CD8-positive, alpha-beta memory T cell (primary cell): ENCODE measurements at regions of chr3 and their contacts with region 1.

Region 1: GRCh38 chr3:50095352-50095998 is 6.8 kb downstream of the RBM5 start:
- DNase-seq: no peak
- H3K4me3 ChIP-seq: no peak overlapping the region
- H3K4me3 Mint-ChIP-seq: peak overlapping the region in 1 of 7 donors; percentile 62
- H3K27ac ChIP-seq: no peak overlapping the region
- H3K27ac Mint-ChIP-seq: peak overlapping the region in 4 of 8 donors; percentile 6 to 61 (median 30)
- H3K4me1 ChIP-seq: peaks cover 16% of the 10 kb centered on the region
- H3K4me1 Mint-ChIP-seq: peaks cover 34 to 50% (median 36%) of the 10 kb centered on the region in 3 donors
- H3K27me3 ChIP-seq: no peaks in the 10 kb centered on the region
- H3K27me3 Mint-ChIP-seq: no peaks in the 10 kb centered on the region

Region 2: DNA sequence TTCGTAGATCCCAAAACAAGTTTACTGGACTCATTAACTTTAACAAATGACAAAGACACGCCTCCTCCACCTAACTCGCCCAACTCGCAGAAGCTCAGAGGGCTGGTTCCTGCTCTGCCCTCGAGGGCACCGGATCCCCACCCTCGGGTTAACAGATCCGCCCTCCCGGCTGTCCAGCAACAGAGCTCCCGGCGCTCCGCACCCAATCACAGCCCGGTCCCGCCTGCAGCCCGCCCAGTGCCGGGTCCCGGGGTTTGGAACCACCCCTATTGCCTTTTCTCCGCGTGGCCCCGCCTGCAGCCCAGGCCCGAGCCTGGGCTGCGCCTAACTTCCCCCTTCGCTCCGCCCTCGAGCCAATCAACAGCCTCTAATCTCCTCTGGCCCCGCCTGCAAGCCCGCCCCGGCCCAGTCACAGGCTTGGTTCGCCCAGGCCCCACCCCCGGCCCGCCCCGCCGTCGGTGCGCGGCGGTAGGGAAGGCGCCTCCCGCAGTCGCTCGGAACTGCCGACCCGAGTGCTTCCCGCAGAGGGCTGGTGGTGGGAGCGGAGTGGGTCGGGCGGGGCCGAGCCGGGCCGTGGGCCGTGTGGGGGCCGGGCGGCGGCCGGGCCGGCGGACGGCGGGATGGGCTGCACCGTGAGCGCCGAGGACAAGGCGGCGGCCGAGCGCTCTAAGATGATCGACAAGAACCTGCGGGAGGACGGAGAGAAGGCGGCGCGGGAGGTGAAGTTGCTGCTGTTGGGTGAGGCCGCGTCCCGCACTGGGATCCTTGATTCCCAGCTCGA is 140.4 kb after region 1 on chr3 and contains the start of gene GNAI2:
- CTCF ChIA-PET with region 1: no interaction called
- POLR2A ChIA-PET with region 1: interaction called, 13 read pairs
- DNase-seq: peak; percentile 98 to 99 (median 99)
- H3K4me3 ChIP-seq: peak within 1 kb of the TSS; percentile 99
- H3K4me3 Mint-ChIP-seq: peak within 1 kb of the TSS; percentile 87 to 99 (median 98)
- H3K27ac ChIP-seq: peak within 1 kb of the TSS; percentile 71
- H3K27ac Mint-ChIP-seq: peak within 1 kb of the TSS; percentile 93 to 99 (median 96)
- H3K4me1 ChIP-seq: peaks cover 37% of the 10 kb centered on the region
- H3K4me1 Mint-ChIP-seq: peaks cover 28 to 35% (median 33%) of the 10 kb centered on the region in 3 donors
- H3K27me3 ChIP-seq: no peaks in the 10 kb centered on the region
- H3K27me3 Mint-ChIP-seq: no peaks in the 10 kb centered on the region
- total RNA-seq, gene GNAI2: 259 to 265 TPM